Naive thymus-derived CD4-positive, alpha-beta T cell (primary cell): ENCODE measurements at regions of chr1 and their contacts with region 1.

Region 1: GRCh38 chr1:40449684-40450494 is at the start of gene ZFP69B:
- DNase-seq: peak; percentile 73 to 97 (median 82)
- ATAC-seq: peak; percentile 91
- H3K4me3 ChIP-seq: peak within 1 kb of the TSS; percentile 90
- H3K4me3 Mint-ChIP-seq: peak within 1 kb of the TSS; percentile 83 to 96 (median 93)
- H3K27ac ChIP-seq: peak within 1 kb of the TSS; percentile 65
- H3K27ac Mint-ChIP-seq: peak within 1 kb of the TSS; percentile 84 to 94 (median 92)
- H3K4me1 ChIP-seq: peaks cover 11 to 19% of the 10 kb centered on the region in 2 donors
- H3K4me1 Mint-ChIP-seq: peaks cover 14 to 30% (median 25%) of the 10 kb centered on the region in 7 donors
- H3K27me3 ChIP-seq: no peaks in the 10 kb centered on the region
- H3K27me3 Mint-ChIP-seq: no peaks in the 10 kb centered on the region
- total RNA-seq, gene ZFP69B: 2.2 to 8.3 (median 5.3) TPM

Region 2: DNA sequence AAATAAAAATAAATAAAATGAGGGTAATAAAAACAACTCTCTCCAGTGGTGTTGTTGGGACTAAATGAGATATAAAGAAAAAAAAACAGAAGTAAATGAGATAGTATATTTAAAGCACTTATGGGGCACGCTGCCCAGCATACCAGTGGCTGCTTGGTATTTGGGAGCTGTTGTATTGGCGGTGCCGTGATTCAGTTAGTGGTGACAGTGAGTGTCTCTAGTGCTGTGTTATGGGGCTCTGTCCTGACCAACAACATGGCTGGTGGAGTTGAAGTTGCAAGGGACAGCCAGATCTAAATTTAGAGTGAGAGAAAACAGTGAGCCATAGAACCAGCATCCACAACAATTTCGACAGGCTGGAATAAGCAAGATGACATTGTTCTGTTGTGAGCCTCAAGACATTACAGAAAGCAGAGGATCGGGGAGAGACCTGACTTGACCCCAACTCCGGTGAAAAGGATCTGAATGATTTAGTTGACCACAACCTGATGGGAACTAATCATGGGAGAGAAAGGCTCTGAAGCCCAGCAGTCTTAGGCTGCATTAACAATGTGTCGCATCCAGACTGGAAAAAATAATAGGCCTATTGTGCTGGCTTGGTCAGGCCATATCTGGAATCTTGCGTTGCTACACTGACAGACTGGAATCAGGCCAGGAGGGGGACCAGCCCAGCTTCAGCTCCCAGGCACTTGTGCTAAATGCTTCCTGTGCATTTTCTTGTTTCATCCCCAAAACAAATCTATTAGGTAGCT is 497.4 kb before region 1 on chr1:
- CTCF ChIA-PET with region 1: no interaction called
- POLR2A ChIA-PET with region 1: no interaction called
- intact Hi-C with region 1: no loop called
- DNase-seq: no peak
- ATAC-seq: no peak
- H3K4me3 ChIP-seq: no peak overlapping the region
- H3K4me3 Mint-ChIP-seq: no peak overlapping the region
- H3K27ac ChIP-seq: no peak overlapping the region
- H3K27ac Mint-ChIP-seq: peak overlapping the region in 2 of 9 donors; percentile 39 to 63
- H3K4me1 ChIP-seq: peaks cover 7 to 18% of the 10 kb centered on the region in 2 donors
- H3K4me1 Mint-ChIP-seq: peaks cover 12 to 20% (median 15%) of the 10 kb centered on the region in 7 donors
- H3K27me3 ChIP-seq: no peaks in the 10 kb centered on the region
- H3K27me3 Mint-ChIP-seq: peaks cover 0 to 7% (median 0%) of the 10 kb centered on the region in 5 donors

Region 3: DNA sequence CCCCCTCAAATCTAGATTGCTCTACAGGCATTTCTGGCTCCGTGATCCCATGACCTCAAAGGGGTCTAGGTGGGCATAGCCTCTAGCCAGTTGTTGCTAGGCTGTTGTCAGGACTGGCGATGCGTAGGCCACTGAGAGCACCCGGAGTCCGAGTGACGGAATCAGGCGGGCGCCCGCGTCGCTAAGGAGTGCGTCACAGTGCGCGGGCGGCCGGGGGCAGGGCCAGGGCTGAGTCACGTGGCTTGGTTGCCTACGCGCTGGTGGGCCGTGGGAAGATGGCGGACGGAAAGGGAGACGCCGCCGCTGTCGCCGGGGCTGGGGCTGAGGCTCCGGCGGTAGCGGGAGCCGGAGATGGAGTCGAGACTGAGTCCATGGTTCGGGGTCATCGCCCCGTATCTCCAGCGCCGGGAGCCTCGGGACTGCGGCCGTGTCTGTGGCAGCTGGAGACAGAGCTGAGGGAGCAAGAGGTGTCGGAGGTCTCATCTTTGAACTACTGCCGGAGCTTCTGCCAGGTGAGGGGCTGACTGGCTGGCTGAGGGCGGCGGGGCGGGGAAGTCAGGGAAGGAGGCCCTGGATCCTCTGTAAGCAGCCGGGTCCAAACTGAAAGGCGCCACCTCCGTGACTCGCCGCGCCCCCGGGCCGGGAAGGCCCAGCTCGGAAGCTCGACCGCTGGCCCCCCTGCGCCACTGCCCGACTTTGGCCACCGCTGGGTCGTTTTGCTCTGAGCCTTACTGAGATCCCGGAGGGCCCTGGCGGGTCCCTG is 288.6 kb before region 1 on chr1 and contains the start of gene RLF:
- CTCF ChIA-PET with region 1: no interaction called
- POLR2A ChIA-PET with region 1: no interaction called
- intact Hi-C with region 1: loop called in 1 of 2 experiments (anchors 5 kb)
- DNase-seq: peak; percentile 91 to 97 (median 95)
- ATAC-seq: peak; percentile 99
- H3K4me3 ChIP-seq: peak within 1 kb of the TSS; percentile 76
- H3K4me3 Mint-ChIP-seq: no peak within 1 kb of the TSS
- H3K27ac ChIP-seq: peak within 1 kb of the TSS; percentile 88
- H3K27ac Mint-ChIP-seq: peak within 1 kb of the TSS in 2 of 9 donors; percentile 99 to 100
- H3K4me1 ChIP-seq: peaks cover 22 to 25% of the 10 kb centered on the region in 2 donors
- H3K4me1 Mint-ChIP-seq: peaks cover 5 to 19% (median 7%) of the 10 kb centered on the region in 7 donors
- H3K27me3 ChIP-seq: no peaks in the 10 kb centered on the region
- H3K27me3 Mint-ChIP-seq: no peaks in the 10 kb centered on the region
- total RNA-seq, gene RLF: 20.9 to 28.6 (median 24.7) TPM

Region 4: DNA sequence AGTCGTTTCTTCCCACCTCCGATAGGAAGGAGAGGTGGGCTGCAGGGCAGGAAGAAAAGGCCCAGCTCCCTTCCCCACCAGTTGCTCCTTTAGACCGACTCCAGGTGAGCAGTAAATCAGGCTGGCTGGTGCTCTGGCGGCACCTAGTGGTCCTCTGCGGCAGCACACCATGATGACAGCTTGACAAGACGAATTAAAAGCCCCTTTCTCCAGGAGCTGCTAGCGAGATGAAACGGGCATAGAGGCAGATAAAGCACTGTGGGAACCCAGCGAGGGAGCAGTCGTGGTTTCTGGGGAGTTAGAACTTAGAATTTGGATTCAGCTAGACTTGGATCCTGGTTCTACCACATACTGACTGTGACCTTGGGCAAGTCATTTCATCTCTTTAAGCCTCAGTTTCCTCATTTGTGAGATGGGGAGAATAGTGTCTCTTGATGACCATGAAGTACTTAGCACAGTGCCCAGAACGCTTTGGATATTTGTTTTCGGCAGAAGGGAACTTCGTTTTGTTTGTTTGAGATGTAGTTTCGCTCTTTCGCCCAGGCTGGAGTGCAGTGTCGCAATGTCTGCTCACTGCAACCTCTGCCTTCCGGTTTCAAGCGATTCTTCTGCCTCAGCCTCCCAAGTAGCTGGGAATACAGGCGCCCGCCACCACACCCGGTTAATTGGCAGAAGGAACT is 111.0 kb before region 1 on chr1:
- CTCF ChIA-PET with region 1: no interaction called
- POLR2A ChIA-PET with region 1: no interaction called
- intact Hi-C with region 1: no loop called
- DNase-seq: peak; percentile 81 to 91 (median 87)
- ATAC-seq: peak; percentile 99
- H3K4me3 ChIP-seq: no peak overlapping the region
- H3K4me3 Mint-ChIP-seq: peak overlapping the region; percentile 37 to 76 (median 57)
- H3K27ac ChIP-seq: no peak overlapping the region
- H3K27ac Mint-ChIP-seq: peak overlapping the region in 8 of 9 donors; percentile 16 to 86 (median 70)
- H3K4me1 ChIP-seq: peaks cover 6 to 35% of the 10 kb centered on the region in 2 donors
- H3K4me1 Mint-ChIP-seq: peaks cover 33 to 50% (median 49%) of the 10 kb centered on the region in 7 donors
- H3K27me3 ChIP-seq: no peaks in the 10 kb centered on the region
- H3K27me3 Mint-ChIP-seq: no peaks in the 10 kb centered on the region

Region 5: DNA sequence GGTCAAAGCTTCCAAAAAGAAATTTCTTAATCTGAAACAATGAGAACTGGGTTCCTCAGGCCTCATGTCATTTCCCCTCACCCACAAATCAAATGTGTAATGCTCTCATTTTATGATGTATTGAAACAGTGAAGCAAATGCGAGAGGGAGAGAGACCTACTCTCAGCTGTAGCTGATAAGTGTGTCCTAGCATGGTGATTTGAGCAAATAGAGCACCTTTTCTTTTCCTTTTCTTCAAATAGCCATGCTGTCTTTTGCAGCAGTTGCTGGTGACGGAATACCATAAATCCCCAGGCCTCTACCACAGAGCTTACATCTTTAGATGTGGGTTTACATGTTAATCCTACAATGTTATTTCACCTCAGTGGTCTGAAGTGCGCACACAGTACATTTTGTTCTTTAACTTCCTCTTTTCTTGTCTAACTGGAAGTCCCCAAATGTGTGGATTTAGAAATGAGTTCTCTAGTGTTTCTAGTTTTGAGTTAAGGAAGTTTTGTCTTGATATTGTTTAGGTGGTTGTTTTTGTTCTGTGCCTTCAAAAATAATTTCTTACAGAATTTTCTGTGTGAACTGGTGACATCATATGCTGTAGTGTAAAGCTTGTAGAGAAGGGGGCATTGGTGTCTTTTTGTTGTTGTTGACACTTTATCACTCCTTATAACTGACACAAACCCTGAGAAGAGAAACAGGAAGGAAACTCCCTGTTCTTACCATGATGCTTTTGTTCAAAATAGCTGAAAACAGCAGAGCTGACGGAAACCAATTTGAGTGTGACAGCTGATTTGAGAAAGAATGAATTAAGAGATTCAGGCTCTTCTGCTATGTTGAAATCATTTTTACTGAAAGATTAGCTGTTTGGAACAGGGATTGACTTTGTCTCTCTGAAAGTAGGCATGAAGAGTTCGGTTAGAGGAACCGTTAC is 64.2 kb before region 1 on chr1:
- CTCF ChIA-PET with region 1: interaction called, 3 read pairs
- POLR2A ChIA-PET with region 1: no interaction called
- intact Hi-C with region 1: loop called in 1 of 2 experiments (anchors 2 kb)
- DNase-seq: peak in 8 of 9 donors; percentile 55 to 97 (median 94)
- ATAC-seq: peak; percentile 86
- H3K4me3 ChIP-seq: peak overlapping the region; percentile 48
- H3K4me3 Mint-ChIP-seq: peak overlapping the region; percentile 79 to 99 (median 87)
- H3K27ac ChIP-seq: peak overlapping the region; percentile 99
- H3K27ac Mint-ChIP-seq: peak overlapping the region; percentile 97 to 99 (median 98)
- H3K4me1 ChIP-seq: peaks cover 82 to 84% of the 10 kb centered on the region in 2 donors
- H3K4me1 Mint-ChIP-seq: peaks cover 71 to 94% (median 90%) of the 10 kb centered on the region in 7 donors
- H3K27me3 ChIP-seq: no peaks in the 10 kb centered on the region
- H3K27me3 Mint-ChIP-seq: no peaks in the 10 kb centered on the region

Region 6: DNA sequence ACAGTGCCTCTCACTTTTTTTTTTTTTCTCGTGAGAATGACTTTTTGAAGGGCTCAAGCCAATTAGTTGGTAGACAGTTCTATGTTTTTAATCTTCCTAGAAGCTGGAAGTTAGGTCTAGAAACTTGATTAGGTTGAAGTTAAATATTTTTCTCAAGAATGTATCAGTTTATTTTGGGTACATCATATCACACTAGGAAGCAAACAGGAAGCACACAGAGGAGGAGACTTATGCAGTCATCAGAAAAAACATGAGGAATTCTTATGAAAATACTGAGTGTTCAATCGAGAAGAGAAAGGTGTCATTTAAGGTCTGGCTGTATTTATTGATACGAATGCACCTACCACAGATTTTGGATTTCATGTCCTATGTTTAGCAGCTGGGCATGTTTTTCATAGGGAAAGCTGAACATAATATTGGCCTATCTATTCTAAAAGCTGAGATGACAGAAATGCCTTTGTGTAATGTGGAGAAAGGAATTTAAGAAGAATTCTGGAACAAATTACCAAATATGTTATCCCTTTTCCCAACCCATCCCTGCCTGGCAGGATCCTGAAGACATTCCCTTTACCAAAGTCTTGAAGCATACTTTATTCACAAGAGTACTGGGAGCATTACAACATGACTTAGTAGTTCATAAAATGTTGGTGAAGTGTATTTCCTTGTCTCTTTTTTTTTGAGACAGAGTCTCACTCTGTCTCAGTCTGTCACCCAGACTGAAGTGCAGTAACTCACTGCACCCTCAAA is 17.1 kb before region 1 on chr1:
- CTCF ChIA-PET with region 1: interaction called, 5 read pairs
- POLR2A ChIA-PET with region 1: no interaction called
- intact Hi-C with region 1: loop called in 1 of 2 experiments (anchors 1 kb)
- DNase-seq: no peak
- ATAC-seq: no peak
- H3K4me3 ChIP-seq: no peak overlapping the region
- H3K4me3 Mint-ChIP-seq: no peak overlapping the region
- H3K27ac ChIP-seq: no peak overlapping the region
- H3K27ac Mint-ChIP-seq: peak overlapping the region in 1 of 9 donors; percentile 9
- H3K4me1 ChIP-seq: no peaks in the 10 kb centered on the region
- H3K4me1 Mint-ChIP-seq: no peaks in the 10 kb centered on the region
- H3K27me3 ChIP-seq: no peaks in the 10 kb centered on the region
- H3K27me3 Mint-ChIP-seq: no peaks in the 10 kb centered on the region

Region 7: DNA sequence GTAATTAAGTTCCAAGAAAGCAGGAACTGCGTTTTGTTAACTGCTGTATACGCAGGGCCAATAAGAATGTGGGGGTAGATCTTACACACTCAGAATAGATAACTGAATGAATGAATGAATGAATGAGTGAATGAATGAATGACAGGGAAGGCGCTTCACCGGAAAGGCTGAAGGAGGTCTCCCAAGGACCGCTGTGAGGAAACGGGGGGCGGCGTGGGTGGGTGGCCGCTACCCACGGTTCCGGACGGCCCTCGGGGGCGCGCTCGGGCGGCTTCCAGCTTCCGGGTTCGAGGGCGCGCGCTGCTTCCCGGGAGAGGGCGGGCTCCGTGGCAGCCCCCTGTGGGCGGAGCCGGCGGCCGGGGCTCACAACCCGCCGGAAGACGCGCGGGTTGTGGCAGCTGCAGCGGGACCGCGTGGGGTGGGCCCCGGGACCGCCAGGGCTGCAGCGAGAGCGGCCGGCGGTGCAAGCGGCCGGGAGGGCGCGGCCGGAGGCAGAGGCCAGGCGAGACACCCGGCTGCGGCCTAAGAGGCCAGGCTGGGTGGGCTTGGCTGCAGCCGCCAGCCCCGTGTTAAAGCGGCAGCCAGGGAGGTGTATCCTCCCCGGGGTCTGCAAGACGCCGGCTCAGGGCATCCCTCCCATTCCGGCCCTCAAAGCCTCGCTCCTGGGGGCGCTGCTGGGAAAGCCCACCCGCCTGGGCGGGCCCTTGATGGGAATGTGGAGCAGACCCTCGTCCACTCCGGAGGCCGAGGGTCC is 27.2 kb after region 1 on chr1 and contains the start of gene ZFP69:
- CTCF ChIA-PET with region 1: no interaction called
- POLR2A ChIA-PET with region 1: no interaction called
- intact Hi-C with region 1: loop called (anchors 2 kb)
- DNase-seq: peak; percentile 53 to 70 (median 65)
- ATAC-seq: peak; percentile 91
- H3K4me3 ChIP-seq: peak within 1 kb of the TSS; percentile 85
- H3K4me3 Mint-ChIP-seq: peak within 1 kb of the TSS; percentile 83 to 99 (median 92)
- H3K27ac ChIP-seq: peak within 1 kb of the TSS; percentile 64
- H3K27ac Mint-ChIP-seq: peak within 1 kb of the TSS; percentile 70 to 95 (median 82)
- H3K4me1 ChIP-seq: peaks cover 0 to 5% of the 10 kb centered on the region in 2 donors
- H3K4me1 Mint-ChIP-seq: peaks cover 12 to 34% (median 27%) of the 10 kb centered on the region in 7 donors
- H3K27me3 ChIP-seq: no peaks in the 10 kb centered on the region
- H3K27me3 Mint-ChIP-seq: no peaks in the 10 kb centered on the region
- total RNA-seq, gene ZFP69: 2.7 to 4.3 (median 3.4) TPM

Region 8: GRCh38 chr1:40508375-40509341 is 58.8 kb after region 1 on chr1 and contains the start of gene EXO5:
- CTCF ChIA-PET with region 1: no interaction called
- POLR2A ChIA-PET with region 1: interaction called, 4 read pairs
- intact Hi-C with region 1: loop called (anchors 1 kb)
- DNase-seq: peak; percentile 59 to 88 (median 67)
- ATAC-seq: peak; percentile 99
- H3K4me3 ChIP-seq: peak within 1 kb of the TSS; percentile 70
- H3K4me3 Mint-ChIP-seq: peak within 1 kb of the TSS; percentile 76 to 93 (median 91)
- H3K27ac ChIP-seq: peak within 1 kb of the TSS; percentile 68
- H3K27ac Mint-ChIP-seq: peak within 1 kb of the TSS; percentile 44 to 91 (median 74)
- H3K4me1 ChIP-seq: no peaks in the 10 kb centered on the region
- H3K4me1 Mint-ChIP-seq: peaks cover 9 to 18% (median 12%) of the 10 kb centered on the region in 7 donors
- H3K27me3 ChIP-seq: no peaks in the 10 kb centered on the region
- H3K27me3 Mint-ChIP-seq: no peaks in the 10 kb centered on the region
- total RNA-seq, gene EXO5: 5.2 to 14.1 (median 8.6) TPM

Region 9: DNA sequence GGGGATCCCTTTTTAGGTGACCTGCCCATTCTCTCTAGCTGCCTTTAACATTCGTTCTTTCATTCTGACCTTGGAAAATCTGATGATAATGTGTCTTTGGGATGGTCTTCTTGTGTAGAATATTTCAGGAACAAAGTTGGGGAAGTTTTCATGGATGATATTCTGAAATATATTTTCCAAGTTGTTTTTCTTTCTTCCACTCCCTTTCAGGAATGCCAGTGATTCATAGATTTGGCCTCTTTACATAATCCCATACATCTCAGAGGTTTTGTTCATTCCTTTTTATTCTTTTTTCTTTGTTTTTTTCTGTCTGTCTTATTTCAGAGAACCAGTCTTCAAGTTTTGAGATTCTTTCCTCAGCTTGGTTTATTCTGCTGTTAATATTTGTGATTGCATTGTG is 806.1 kb after region 1 on chr1:
- CTCF ChIA-PET with region 1: no interaction called
- POLR2A ChIA-PET with region 1: no interaction called
- intact Hi-C with region 1: no loop called
- DNase-seq: no peak
- ATAC-seq: no peak
- H3K4me3 ChIP-seq: no peak overlapping the region
- H3K4me3 Mint-ChIP-seq: no peak overlapping the region
- H3K27ac ChIP-seq: no peak overlapping the region
- H3K27ac Mint-ChIP-seq: no peak overlapping the region
- H3K4me1 ChIP-seq: no peaks in the 10 kb centered on the region
- H3K4me1 Mint-ChIP-seq: no peaks in the 10 kb centered on the region
- H3K27me3 ChIP-seq: no peaks in the 10 kb centered on the region
- H3K27me3 Mint-ChIP-seq: peaks cover 30 to 50% (median 33%) of the 10 kb centered on the region in 5 donors